Left lung (tissue), 14 donors: ENCODE measurements at regions of chr6 and their contacts with region 1.

Region 1: GRCh38 chr6:154928325-154928922 is 66.7 kb upstream of the TIAM2 start:
- DNase-seq: peak in 2 of 4 donors; percentile 67 to 75
- ATAC-seq: peak; percentile 92
- H3K4me3 ChIP-seq: no peak overlapping the region
- H3K27ac ChIP-seq: no peak overlapping the region
- H3K4me1 ChIP-seq: no peaks in the 10 kb centered on the region
- H3K27me3 ChIP-seq: no peaks in the 10 kb centered on the region
- CTCF ChIP-seq: peak; percentile 52 to 69

Region 2: DNA sequence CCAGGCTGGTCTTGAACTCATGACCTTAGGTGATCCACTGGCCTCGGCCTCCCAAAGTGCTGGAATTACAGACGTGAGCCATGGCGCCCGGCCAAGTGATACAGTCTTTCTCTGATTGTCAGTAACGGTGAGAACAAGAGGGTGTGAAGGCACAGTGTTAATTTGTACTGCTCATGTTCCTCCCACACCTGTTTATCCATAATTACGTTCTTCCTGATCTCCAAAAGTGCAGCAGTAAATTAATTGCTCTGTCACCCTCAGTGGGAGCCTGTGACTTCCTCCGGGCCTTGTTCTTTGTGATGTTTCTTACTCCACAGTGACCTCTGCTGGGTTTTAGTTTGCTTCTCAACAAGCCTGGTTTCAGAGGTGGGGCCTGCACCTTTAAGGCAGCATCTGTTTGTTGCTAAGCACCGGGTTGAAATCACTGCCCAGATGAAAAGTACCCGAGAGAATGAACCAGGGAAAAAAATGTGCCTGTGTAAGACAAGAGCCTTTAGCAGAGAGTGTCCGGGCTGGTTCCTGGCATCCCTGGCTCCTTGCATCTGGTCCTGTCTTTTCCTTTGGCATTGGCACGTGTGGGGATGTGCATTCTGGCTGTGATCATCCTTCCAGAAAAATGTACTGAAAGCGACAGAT is 246.3 kb after region 1 on chr6:
- intact Hi-C with region 1: loop called in 1 of 2 experiments (anchors 10 kb)
- DNase-seq: peak in 1 of 4 donors; percentile 74
- ATAC-seq: peak; percentile 91
- H3K4me3 ChIP-seq: no peak overlapping the region
- H3K27ac ChIP-seq: no peak overlapping the region
- H3K4me1 ChIP-seq: peaks cover 0 to 17% of the 10 kb centered on the region in 2 donors
- H3K27me3 ChIP-seq: no peaks in the 10 kb centered on the region
- CTCF ChIP-seq: peak; percentile 36 to 43